Heart right ventricle (tissue), 16 donors: ENCODE measurements at regions of chr14 and their contacts with region 1.

Region 1: GRCh38 chr14:72643317-72643801 is 250.5 kb downstream of the DPF3 start:
- DNase-seq: peak in 1 of 2 donors; percentile 29
- ATAC-seq: peak; percentile 52 to 93 (median 76)
- H3K4me3 ChIP-seq: no peak overlapping the region
- H3K27ac ChIP-seq: peak overlapping the region in 1 of 10 donors; percentile 68
- H3K4me1 ChIP-seq: peaks cover 0 to 23% (median 14%) of the 10 kb centered on the region in 9 donors
- H3K27me3 ChIP-seq: no peaks in the 10 kb centered on the region
- CTCF ChIP-seq: peak in 1 of 9 donors; percentile 11

Region 2: DNA sequence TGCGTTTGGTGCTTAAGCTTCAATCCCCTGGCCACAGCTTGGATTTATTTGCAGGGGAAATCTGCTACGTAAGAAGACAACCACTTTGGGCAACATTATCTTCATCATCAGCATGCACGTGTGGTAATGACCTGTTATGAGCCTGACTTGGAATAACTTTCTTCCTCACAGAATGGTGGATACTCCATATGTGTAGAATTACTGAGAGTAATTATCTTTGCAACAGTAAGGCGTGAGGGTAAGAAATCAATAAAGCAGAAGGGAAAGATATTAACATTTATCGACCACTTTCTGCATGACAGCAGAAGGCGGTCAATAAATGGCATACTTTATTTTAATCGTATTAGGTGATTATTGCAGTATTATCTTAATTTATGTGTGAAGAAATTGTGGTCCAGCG is 558.4 kb before region 1 on chr14:
- intact Hi-C with region 1: loop called in 1 of 10 experiments (anchors 5 kb)
- DNase-seq: no peak
- ATAC-seq: no peak
- H3K4me3 ChIP-seq: no peak overlapping the region
- H3K27ac ChIP-seq: no peak overlapping the region
- H3K4me1 ChIP-seq: peaks cover 0 to 13% (median 0%) of the 10 kb centered on the region in 9 donors
- H3K27me3 ChIP-seq: no peaks in the 10 kb centered on the region
- CTCF ChIP-seq: no peak

Region 3: GRCh38 chr14:72451054-72451972 is 192.0 kb before region 1 on chr14:
- intact Hi-C with region 1: no loop called
- DNase-seq: no peak
- ATAC-seq: peak in 2 of 8 donors; percentile 26 to 50
- H3K4me3 ChIP-seq: no peak overlapping the region
- H3K27ac ChIP-seq: peak overlapping the region in 2 of 10 donors; percentile 53 to 63
- H3K4me1 ChIP-seq: peaks cover 0 to 23% (median 0%) of the 10 kb centered on the region in 9 donors
- H3K27me3 ChIP-seq: no peaks in the 10 kb centered on the region
- CTCF ChIP-seq: no peak

Region 4: GRCh38 chr14:72539661-72540315 is 103.6 kb before region 1 on chr14:
- intact Hi-C with region 1: loop called in 1 of 10 experiments (anchors 1 kb)
- DNase-seq: no peak
- ATAC-seq: no peak
- H3K4me3 ChIP-seq: no peak overlapping the region
- H3K27ac ChIP-seq: peak overlapping the region in 1 of 10 donors; percentile 20
- H3K4me1 ChIP-seq: peaks cover 0 to 29% (median 7%) of the 10 kb centered on the region in 9 donors
- H3K27me3 ChIP-seq: no peaks in the 10 kb centered on the region
- CTCF ChIP-seq: no peak

Region 5: DNA sequence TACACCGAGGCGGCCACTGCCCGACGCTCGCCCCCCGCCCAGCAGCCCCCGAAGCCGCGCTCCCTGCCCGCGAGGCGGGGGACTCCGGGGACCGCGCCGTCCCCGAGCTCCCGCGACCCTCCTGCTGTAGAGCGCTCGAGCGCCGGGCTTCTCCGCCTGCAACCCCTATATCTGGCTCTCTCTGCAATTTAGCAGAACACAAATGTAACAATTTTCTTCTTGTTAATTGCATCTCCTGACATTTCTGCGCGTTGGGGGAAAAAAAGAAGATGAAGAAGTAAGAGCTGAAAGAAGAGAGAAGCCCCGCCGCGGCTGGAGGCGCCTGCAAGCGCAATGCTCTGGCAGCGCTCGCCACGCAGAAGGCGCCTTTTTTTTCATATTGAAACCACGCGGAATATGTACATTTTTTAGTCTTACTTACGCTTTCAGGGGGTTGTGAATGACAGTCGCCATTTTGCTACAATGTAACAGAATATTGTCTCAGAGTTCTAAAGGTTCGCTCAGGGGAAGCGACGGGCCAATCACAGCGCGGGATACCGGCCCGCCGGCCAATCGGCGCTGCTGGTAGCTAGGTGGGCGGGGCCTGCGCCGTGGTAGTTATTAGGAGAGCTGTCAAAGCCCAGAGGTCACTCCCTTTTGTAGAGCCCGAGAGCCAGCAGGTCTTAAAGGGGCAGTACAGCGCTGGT is 250.4 kb after region 1 on chr14 and contains the start of gene DPF3:
- intact Hi-C with region 1: no loop called
- DNase-seq: peak; percentile 96
- ATAC-seq: peak; percentile 93 to 98 (median 96)
- H3K4me3 ChIP-seq: peak within 1 kb of the TSS; percentile 70 to 94 (median 87)
- H3K27ac ChIP-seq: peak within 1 kb of the TSS; percentile 71 to 87 (median 82)
- H3K4me1 ChIP-seq: peaks cover 0 to 46% (median 27%) of the 10 kb centered on the region in 9 donors
- H3K27me3 ChIP-seq: peaks cover 0 to 76% (median 19%) of the 10 kb centered on the region in 7 donors
- CTCF ChIP-seq: no peak
- total RNA-seq, gene DPF3: 23.2 to 52.3 (median 43.5) TPM